AG04450 (cell line): ENCODE measurements at regions of chr20 and their contacts with region 1.

Region 1: DNA sequence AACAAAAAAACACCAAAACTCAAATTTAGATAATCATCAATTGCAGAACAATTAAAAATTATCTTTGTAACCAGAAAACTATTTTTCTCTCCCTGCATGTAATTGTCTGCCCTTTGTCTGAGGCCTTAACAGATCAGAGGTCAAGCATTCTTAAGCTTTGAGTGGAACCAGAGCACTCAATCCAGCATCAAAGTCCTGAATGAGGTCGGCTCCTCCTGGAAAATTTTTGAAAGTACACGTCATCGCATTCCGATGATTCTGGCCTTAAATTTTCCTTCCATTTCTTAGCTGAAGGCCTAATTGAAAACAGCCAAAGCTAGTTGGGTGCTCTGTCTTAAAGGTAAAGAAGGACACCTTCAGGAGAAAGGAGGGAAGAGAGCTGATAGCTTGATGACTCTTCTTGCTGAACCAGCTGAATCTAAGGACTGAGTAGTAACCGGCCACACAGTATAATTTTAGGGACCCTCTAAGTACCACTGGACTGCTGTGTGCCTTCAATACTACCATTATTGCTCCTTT is 510.2 kb upstream of the SULF2 start:
- DNase-seq: peak; percentile 79
- H3K4me3 ChIP-seq: no peak overlapping the region
- H3K27ac ChIP-seq: peak overlapping the region; percentile 89
- H3K27me3 ChIP-seq: peaks cover 4% of the 10 kb centered on the region
- CTCF ChIP-seq: peak; percentile 48

Region 2: DNA sequence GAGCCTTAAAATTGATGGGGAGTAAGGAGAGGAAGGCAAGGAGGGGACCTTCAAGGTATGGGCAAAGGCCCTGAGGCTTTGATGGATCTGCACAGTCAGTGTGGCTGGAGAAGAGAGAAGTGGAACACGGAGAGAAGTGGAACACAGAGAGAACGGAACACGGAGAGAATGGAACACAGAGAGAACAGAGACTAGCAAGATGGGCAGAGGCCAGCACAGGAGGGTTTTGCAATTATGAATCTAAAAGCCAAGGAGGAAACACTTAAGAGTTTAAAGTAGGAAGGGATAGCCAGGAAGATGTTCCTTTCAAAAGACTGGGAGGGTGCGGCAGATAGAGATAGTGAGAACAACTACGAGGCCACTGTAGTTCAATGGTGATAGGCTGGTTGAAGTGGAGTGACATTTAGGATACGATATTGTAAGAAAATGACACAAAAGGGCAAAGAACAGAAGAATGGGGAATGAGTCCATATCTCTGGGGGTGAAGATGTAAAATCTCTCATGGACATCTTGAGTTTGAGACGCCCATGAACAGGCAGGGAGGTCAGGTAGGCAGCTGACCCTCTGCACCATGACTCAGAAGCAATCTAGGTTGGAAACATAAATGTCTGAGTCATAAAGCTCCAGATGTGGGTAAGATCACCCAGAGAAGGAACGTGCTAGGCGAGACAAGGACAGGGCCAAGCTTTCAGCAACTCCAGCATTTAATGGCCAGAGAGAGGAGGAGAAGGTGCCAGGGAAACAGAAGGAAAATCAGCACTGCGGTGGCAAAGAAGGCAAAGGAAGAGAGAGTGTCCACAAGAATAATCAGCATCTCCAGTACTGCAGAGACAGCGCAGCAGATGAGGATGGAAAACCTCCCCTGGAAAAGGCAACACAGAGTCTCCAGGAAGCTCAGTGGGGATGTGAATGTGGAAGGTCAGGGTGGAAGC is 964.3 kb before region 1 on chr20:
- CTCF ChIA-PET with region 1: no interaction called
- POLR2A ChIA-PET with region 1: interaction called, 11 read pairs
- DNase-seq: no peak
- H3K4me3 ChIP-seq: no peak overlapping the region
- H3K27ac ChIP-seq: peak overlapping the region; percentile 86
- H3K27me3 ChIP-seq: no peaks in the 10 kb centered on the region
- CTCF ChIP-seq: no peak

Region 3: GRCh38 chr20:47663333-47664067 is 632.0 kb before region 1 on chr20:
- CTCF ChIA-PET with region 1: interaction called, 10 read pairs
- POLR2A ChIA-PET with region 1: no interaction called
- DNase-seq: peak; percentile 57
- H3K4me3 ChIP-seq: no peak overlapping the region
- H3K27ac ChIP-seq: no peak overlapping the region
- H3K27me3 ChIP-seq: no peaks in the 10 kb centered on the region
- CTCF ChIP-seq: peak; percentile 97